Naive thymus-derived CD4-positive, alpha-beta T cell (primary cell): ENCODE measurements at regions of chr18 and their contacts with region 1.

Region 1: GRCh38 chr18:23462876-23463275 is 9.8 kb downstream of the RIOK3 start:
- DNase-seq: no peak
- ATAC-seq: no peak
- H3K4me3 ChIP-seq: no peak overlapping the region
- H3K4me3 Mint-ChIP-seq: no peak overlapping the region
- H3K27ac ChIP-seq: no peak overlapping the region
- H3K27ac Mint-ChIP-seq: peak overlapping the region in 1 of 9 donors; percentile 65
- H3K4me1 ChIP-seq: peaks cover 16 to 18% of the 10 kb centered on the region in 2 donors
- H3K4me1 Mint-ChIP-seq: peaks cover 34 to 54% (median 44%) of the 10 kb centered on the region in 7 donors
- H3K27me3 ChIP-seq: no peaks in the 10 kb centered on the region
- H3K27me3 Mint-ChIP-seq: no peaks in the 10 kb centered on the region

Region 2: DNA sequence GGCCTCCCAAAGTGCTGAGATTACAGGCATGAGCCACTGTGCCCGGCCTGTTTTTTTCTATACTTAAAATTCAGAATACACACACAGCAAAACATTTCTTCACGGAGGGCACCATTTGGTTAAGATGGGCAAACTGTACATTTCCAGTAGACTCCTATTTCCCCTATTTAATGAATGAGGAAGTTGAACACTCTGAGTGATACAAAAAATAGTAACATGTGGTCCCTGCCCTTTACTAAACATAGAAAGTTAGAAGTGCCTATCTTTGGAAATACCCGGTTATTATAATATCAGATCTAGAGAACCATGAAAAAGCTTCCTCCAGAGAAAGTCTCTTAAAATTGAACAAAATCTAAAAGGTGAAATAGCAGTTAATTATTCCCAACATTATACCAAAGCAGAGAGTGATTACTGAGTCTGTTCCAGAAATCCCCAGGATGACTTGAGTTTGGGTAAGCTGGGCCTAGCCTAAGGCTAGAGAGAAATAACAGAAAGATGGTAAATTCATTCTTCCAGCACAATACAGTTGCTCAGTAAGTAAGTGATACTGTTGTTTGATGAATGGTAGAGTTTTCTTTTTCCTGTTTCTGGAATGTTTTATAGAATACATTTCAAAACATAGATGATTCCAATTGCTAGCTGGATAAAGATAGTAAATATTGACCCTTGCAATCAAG is 17.1 kb after region 1 on chr18:
- CTCF ChIA-PET with region 1: no interaction called
- POLR2A ChIA-PET with region 1: no interaction called
- intact Hi-C with region 1: loop called in 1 of 2 experiments (anchors 2 kb)
- DNase-seq: no peak
- ATAC-seq: peak; percentile 60
- H3K4me3 ChIP-seq: no peak overlapping the region
- H3K4me3 Mint-ChIP-seq: no peak overlapping the region
- H3K27ac ChIP-seq: no peak overlapping the region
- H3K27ac Mint-ChIP-seq: peak overlapping the region in 3 of 9 donors; percentile 0 to 53 (median 43)
- H3K4me1 ChIP-seq: no peaks in the 10 kb centered on the region
- H3K4me1 Mint-ChIP-seq: peaks cover 0 to 5% (median 0%) of the 10 kb centered on the region in 7 donors
- H3K27me3 ChIP-seq: no peaks in the 10 kb centered on the region
- H3K27me3 Mint-ChIP-seq: no peaks in the 10 kb centered on the region